B cell (primary cell): ENCODE measurements at regions of chr2 and their contacts with region 1.

Region 1: GRCh38 chr2:216404010-216404618 is 8.2 kb upstream of the SMARCAL1 start:
- DNase-seq: peak; percentile 53
- ATAC-seq: peak; percentile 74
- H3K4me3 ChIP-seq: no peak overlapping the region
- H3K4me3 Mint-ChIP-seq: no peak overlapping the region
- H3K27ac ChIP-seq: no peak overlapping the region
- H3K27ac Mint-ChIP-seq: no peak overlapping the region
- H3K4me1 ChIP-seq: no peaks in the 10 kb centered on the region
- H3K4me1 Mint-ChIP-seq: no peaks in the 10 kb centered on the region
- H3K27me3 ChIP-seq: peaks cover 0 to 7% (median 2%) of the 10 kb centered on the region in 4 experiments
- H3K27me3 Mint-ChIP-seq: peaks cover 28% of the 10 kb centered on the region
- CTCF ChIP-seq: peak; percentile 98

Region 2: DNA sequence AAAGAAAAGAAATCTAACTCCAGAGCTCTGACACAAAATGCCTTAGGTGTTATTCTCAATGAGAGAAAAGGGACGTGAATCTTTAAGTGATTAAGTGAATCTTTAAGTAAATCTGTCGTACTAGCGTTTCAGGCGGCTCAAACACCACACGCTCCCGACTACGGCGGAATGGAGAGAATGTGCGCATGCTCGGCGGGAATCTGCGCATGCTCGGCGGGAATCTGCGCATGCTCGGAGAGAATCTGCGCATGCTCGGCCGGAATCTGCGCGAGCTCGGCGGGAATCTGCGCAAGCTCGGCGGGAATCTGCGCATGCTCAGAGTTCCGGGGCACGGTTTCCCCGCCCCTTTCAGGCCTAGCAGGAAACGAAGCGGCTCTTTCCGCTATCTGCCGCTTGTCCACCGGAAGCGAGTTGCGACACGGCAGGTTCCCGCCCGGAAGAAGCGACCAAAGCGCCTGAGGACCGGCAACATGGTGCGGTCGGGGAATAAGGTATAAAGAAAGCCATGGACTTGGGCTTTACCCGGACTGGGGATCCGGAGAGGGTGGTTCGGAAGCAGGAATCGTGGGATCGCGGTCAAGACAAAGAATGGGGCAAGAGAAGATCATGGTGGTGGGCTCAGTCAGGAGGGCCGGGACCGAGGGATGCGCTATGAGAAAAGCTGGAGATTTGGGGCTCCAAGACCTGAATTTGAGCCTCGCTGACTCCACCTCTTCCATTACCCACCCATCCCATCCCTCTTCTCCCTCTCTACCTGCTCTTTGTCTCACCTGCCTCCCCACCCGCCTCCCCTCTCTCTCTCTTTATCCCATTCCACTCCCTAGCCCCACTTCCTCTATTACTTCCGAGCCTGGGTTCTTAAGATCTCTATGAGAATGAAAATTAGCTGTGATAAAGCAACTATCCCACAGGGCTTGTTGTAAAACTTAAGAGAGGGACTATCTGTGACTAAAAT is 294.9 kb before region 1 on chr2 and contains the start of gene XRCC5:
- CTCF ChIA-PET with region 1: interaction called, 11 read pairs
- POLR2A ChIA-PET with region 1: no interaction called
- intact Hi-C with region 1: no loop called
- DNase-seq: peak; percentile 99
- ATAC-seq: peak; percentile 91
- H3K4me3 ChIP-seq: peak within 1 kb of the TSS; percentile 71 to 96 (median 95)
- H3K4me3 Mint-ChIP-seq: peak within 1 kb of the TSS; percentile 100
- H3K27ac ChIP-seq: peak within 1 kb of the TSS; percentile 91 to 97
- H3K27ac Mint-ChIP-seq: peak within 1 kb of the TSS; percentile 100
- H3K4me1 ChIP-seq: peaks cover 26 to 31% of the 10 kb centered on the region in 2 donors
- H3K4me1 Mint-ChIP-seq: peaks cover 51% of the 10 kb centered on the region
- H3K27me3 ChIP-seq: no peaks in the 10 kb centered on the region
- H3K27me3 Mint-ChIP-seq: peaks cover 3% of the 10 kb centered on the region
- CTCF ChIP-seq: no peak
- total RNA-seq, gene XRCC5: 198 and 216 TPM in 2 replicates

Region 3: DNA sequence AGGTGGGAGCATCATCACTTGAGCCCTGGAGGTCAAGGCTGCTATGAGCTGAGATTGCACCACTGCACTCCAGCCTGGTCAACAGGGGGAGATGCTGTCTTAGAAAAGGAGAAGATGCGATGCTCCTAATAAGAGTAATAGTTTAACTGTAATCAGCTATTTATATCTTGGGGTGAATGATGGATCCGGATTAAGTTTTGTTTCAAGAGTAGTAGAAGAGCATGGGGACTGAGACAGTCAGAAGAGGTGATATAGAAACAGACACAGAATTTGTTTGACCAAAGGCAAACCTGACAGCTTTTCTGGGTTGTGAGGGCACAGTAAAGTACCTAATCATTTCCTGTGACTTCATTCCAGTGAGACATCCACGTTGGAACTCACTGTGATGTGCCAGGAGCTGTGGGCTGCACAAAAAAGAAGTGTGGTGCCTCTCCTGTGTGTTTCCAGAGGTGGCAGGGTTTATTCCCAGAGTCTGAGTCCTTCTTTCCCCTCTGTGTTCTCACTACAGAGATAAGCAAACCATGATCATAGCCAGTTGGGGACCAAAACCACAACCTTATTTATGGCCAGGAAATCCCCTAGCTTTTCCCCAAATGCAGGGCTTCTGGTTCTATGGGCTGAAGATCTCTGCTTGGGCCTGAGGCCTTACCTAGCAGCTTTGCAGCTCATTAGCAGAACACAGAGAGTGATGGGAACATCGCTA is 181.3 kb before region 1 on chr2:
- CTCF ChIA-PET with region 1: interaction called, 24 read pairs
- POLR2A ChIA-PET with region 1: no interaction called
- intact Hi-C with region 1: no loop called
- DNase-seq: peak; percentile 6
- ATAC-seq: no peak
- H3K4me3 ChIP-seq: no peak overlapping the region
- H3K4me3 Mint-ChIP-seq: no peak overlapping the region
- H3K27ac ChIP-seq: peak overlapping the region in 1 of 2 donors; percentile 37
- H3K27ac Mint-ChIP-seq: peak overlapping the region; percentile 29
- H3K4me1 ChIP-seq: peaks cover 11% of the 10 kb centered on the region in 2 donors
- H3K4me1 Mint-ChIP-seq: peaks cover 17% of the 10 kb centered on the region
- H3K27me3 ChIP-seq: no peaks in the 10 kb centered on the region
- H3K27me3 Mint-ChIP-seq: no peaks in the 10 kb centered on the region
- CTCF ChIP-seq: no peak

Region 4: GRCh38 chr2:216418981-216419380 is 14.9 kb after region 1 on chr2:
- CTCF ChIA-PET with region 1: interaction called, 18 read pairs
- POLR2A ChIA-PET with region 1: no interaction called
- intact Hi-C with region 1: no loop called
- DNase-seq: no peak
- ATAC-seq: no peak
- H3K4me3 ChIP-seq: no peak overlapping the region
- H3K4me3 Mint-ChIP-seq: no peak overlapping the region
- H3K27ac ChIP-seq: no peak overlapping the region
- H3K27ac Mint-ChIP-seq: no peak overlapping the region
- H3K4me1 ChIP-seq: peaks cover 7 to 14% of the 10 kb centered on the region in 2 donors
- H3K4me1 Mint-ChIP-seq: peaks cover 20% of the 10 kb centered on the region
- H3K27me3 ChIP-seq: no peaks in the 10 kb centered on the region
- H3K27me3 Mint-ChIP-seq: no peaks in the 10 kb centered on the region
- CTCF ChIP-seq: no peak